Cardiac septum (tissue), 1 donor: ENCODE measurements at regions of chr12 and their contacts with region 1.

Region 1: GRCh38 chr12:124675881-124676715 is 108.7 kb upstream of the NCOR2 start:
- DNase-seq: no peak

Region 2: DNA sequence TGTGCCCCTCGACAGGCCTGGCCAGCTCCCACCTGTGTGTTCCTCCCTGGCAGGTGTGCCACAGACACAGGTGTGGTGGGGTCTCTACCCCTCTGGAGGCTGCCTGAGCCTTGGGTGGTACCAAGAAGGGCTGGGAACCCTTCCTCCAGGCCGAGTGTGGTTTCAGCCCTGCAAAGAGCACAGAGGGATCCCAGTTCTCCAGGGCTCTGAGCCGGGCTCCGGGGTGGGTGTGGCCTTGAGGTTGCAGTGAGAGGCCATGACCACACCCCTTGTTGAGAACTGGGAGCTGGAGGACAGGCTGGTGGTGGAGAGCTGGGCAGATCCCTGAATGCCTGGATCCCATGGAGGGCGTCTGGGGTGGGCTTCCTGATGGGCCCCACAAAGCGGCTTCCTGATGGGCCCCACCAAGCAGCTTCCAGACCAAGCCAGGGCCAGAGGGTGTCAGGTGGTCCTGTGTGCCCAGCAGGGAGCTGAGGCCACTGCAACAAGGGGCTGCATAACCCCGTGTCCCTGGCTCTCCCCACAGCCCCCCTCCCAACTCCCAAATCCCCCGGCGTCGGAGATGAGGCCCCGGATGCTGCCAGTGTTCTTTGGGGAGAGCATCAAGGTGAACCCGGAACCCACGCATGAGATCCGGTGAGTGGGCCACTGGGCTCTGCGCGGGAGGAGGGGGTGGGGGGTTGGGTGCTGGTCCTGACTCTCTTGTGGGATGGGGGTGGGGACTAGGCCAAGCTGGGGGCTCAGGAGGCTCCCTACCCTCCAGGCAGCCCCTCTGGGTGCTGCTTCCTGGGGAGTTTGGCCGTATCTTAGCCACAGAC is 364.6 kb before region 1 on chr12:
- intact Hi-C with region 1: no loop called
- DNase-seq: no peak

Region 3: GRCh38 chr12:124582108-124582424 is 94.0 kb before region 1 on chr12:
- intact Hi-C with region 1: loop called (anchors 5 kb)
- DNase-seq: no peak

Region 4: GRCh38 chr12:124964836-124965462 is 288.9 kb after region 1 on chr12:
- intact Hi-C with region 1: no loop called
- DNase-seq: no peak